ENCODE measurements at regions of chr1 and their contacts with region 1.

Region 1: GRCh38 chr1:104467590-104467989 is 717.9 kb downstream of the AMY1C start:
- DNase-seq: no peak
- ATAC-seq: no peak
- H3K4me3 ChIP-seq: no peak overlapping the region
- H3K4me3 Mint-ChIP-seq: peak overlapping the region in 1 of 10 donors; percentile 1
- H3K27ac ChIP-seq: no peak overlapping the region
- H3K27ac Mint-ChIP-seq: peak overlapping the region in 1 of 9 donors; percentile 48
- H3K4me1 ChIP-seq: no peaks in the 10 kb centered on the region
- H3K4me1 Mint-ChIP-seq: peaks cover 0 to 3% (median 0%) of the 10 kb centered on the region in 7 donors
- H3K27me3 ChIP-seq: no peaks in the 10 kb centered on the region
- H3K27me3 Mint-ChIP-seq: no peaks in the 10 kb centered on the region

Region 2: GRCh38 chr1:104456724-104457123 is 10.9 kb before region 1 on chr1:
- CTCF ChIA-PET with region 1: no interaction called
- POLR2A ChIA-PET with region 1: no interaction called
- intact Hi-C with region 1: loop called in 1 of 2 experiments (anchors 2 kb)
- DNase-seq: no peak
- ATAC-seq: no peak
- H3K4me3 ChIP-seq: no peak overlapping the region
- H3K4me3 Mint-ChIP-seq: no peak overlapping the region
- H3K27ac ChIP-seq: no peak overlapping the region
- H3K27ac Mint-ChIP-seq: no peak overlapping the region
- H3K4me1 ChIP-seq: no peaks in the 10 kb centered on the region
- H3K4me1 Mint-ChIP-seq: no peaks in the 10 kb centered on the region
- H3K27me3 ChIP-seq: no peaks in the 10 kb centered on the region
- H3K27me3 Mint-ChIP-seq: no peaks in the 10 kb centered on the region

Region 3: GRCh38 chr1:104526158-104526795 is 58.7 kb after region 1 on chr1:
- CTCF ChIA-PET with region 1: no interaction called
- POLR2A ChIA-PET with region 1: no interaction called
- intact Hi-C with region 1: no loop called
- DNase-seq: no peak
- ATAC-seq: no peak
- H3K4me3 ChIP-seq: no peak overlapping the region
- H3K4me3 Mint-ChIP-seq: no peak overlapping the region
- H3K27ac ChIP-seq: no peak overlapping the region
- H3K27ac Mint-ChIP-seq: no peak overlapping the region
- H3K4me1 ChIP-seq: no peaks in the 10 kb centered on the region
- H3K4me1 Mint-ChIP-seq: no peaks in the 10 kb centered on the region
- H3K27me3 ChIP-seq: no peaks in the 10 kb centered on the region
- H3K27me3 Mint-ChIP-seq: no peaks in the 10 kb centered on the region